Heart right ventricle (tissue), 16 donors: ENCODE measurements at regions of chr16 and their contacts with region 1.

Region 1: GRCh38 chr16:17836868-17837602 is 366.3 kb upstream of the XYLT1 start:
- DNase-seq: no peak
- ATAC-seq: no peak
- H3K4me3 ChIP-seq: no peak overlapping the region
- H3K27ac ChIP-seq: no peak overlapping the region
- H3K4me1 ChIP-seq: no peaks in the 10 kb centered on the region
- H3K27me3 ChIP-seq: peaks cover 0 to 33% (median 4%) of the 10 kb centered on the region in 7 donors
- CTCF ChIP-seq: no peak

Region 2: GRCh38 chr16:17817260-17817659 is 19.8 kb before region 1 on chr16:
- intact Hi-C with region 1: loop called in 1 of 10 experiments (anchors 2 kb)
- DNase-seq: no peak
- ATAC-seq: no peak
- H3K4me3 ChIP-seq: no peak overlapping the region
- H3K27ac ChIP-seq: no peak overlapping the region
- H3K4me1 ChIP-seq: no peaks in the 10 kb centered on the region
- H3K27me3 ChIP-seq: peaks cover 0 to 3% (median 0%) of the 10 kb centered on the region in 7 donors
- CTCF ChIP-seq: no peak